Activated naive CD8-positive, alpha-beta T cell treated with anti-CD3 and anti-CD28 coated beads, Interleukin-2, amount 10 ng/mL, durations not matched to agents 7 days and 5 days (primary cell): ENCODE measurements at regions of chr9 and their contacts with region 1.

Region 1: GRCh38 chr9:34899535-34900158 is 58.4 kb upstream of the PHF24 start:
- DNase-seq: peak; percentile 78
- ATAC-seq: peak; percentile 97
- H3K4me3 Mint-ChIP-seq: no peak overlapping the region
- H3K27ac Mint-ChIP-seq: no peak overlapping the region
- H3K4me1 Mint-ChIP-seq: no peaks in the 10 kb centered on the region
- H3K27me3 Mint-ChIP-seq: peaks cover 47% of the 10 kb centered on the region

Region 2: GRCh38 chr9:34869390-34869789 is 30.3 kb before region 1 on chr9:
- POLR2A ChIA-PET with region 1: no interaction called
- DNase-seq: no peak
- ATAC-seq: no peak
- H3K4me3 Mint-ChIP-seq: no peak overlapping the region
- H3K27ac Mint-ChIP-seq: no peak overlapping the region
- H3K4me1 Mint-ChIP-seq: no peaks in the 10 kb centered on the region
- H3K27me3 Mint-ChIP-seq: peaks cover 9% of the 10 kb centered on the region

Region 3: DNA sequence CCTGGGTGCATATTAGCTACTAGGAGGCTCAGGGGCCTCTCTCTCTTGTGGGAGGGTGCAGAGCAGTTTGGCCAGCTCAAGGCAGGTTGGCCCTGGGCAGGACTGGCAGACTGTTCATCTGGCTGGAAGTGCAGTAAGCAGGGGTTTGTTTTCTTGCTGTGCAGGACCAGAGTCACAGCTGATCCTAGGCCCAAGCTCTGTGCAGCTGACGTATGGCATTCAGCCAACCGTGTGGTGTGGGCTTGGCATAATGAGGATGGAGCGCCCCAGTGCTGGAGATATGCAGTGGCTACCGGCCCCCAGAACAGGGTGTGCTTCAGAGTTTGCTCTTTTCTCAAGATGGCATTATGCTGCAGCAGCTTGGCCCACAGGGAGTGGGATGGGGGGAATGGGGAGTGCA is 27.4 kb after region 1 on chr9:
- POLR2A ChIA-PET with region 1: no interaction called
- DNase-seq: no peak
- ATAC-seq: no peak
- H3K4me3 Mint-ChIP-seq: no peak overlapping the region
- H3K27ac Mint-ChIP-seq: no peak overlapping the region
- H3K4me1 Mint-ChIP-seq: peaks cover 5% of the 10 kb centered on the region
- H3K27me3 Mint-ChIP-seq: peaks cover 36% of the 10 kb centered on the region

Region 4: GRCh38 chr9:34989003-34989945 is 89.6 kb after region 1 on chr9 and contains the start of gene DNAJB5:
- POLR2A ChIA-PET with region 1: interaction called, 11 read pairs
- DNase-seq: peak; percentile 98
- ATAC-seq: peak; percentile 95
- H3K4me3 Mint-ChIP-seq: peak within 1 kb of the TSS; percentile 81
- H3K27ac Mint-ChIP-seq: peak within 1 kb of the TSS; percentile 92
- H3K4me1 Mint-ChIP-seq: peaks cover 42% of the 10 kb centered on the region
- H3K27me3 Mint-ChIP-seq: no peaks in the 10 kb centered on the region
- total RNA-seq, gene DNAJB5: 3.3 to 5.0 TPM